ENCODE measurements at regions of chr4 and their contacts with region 1.

Region 1: DNA sequence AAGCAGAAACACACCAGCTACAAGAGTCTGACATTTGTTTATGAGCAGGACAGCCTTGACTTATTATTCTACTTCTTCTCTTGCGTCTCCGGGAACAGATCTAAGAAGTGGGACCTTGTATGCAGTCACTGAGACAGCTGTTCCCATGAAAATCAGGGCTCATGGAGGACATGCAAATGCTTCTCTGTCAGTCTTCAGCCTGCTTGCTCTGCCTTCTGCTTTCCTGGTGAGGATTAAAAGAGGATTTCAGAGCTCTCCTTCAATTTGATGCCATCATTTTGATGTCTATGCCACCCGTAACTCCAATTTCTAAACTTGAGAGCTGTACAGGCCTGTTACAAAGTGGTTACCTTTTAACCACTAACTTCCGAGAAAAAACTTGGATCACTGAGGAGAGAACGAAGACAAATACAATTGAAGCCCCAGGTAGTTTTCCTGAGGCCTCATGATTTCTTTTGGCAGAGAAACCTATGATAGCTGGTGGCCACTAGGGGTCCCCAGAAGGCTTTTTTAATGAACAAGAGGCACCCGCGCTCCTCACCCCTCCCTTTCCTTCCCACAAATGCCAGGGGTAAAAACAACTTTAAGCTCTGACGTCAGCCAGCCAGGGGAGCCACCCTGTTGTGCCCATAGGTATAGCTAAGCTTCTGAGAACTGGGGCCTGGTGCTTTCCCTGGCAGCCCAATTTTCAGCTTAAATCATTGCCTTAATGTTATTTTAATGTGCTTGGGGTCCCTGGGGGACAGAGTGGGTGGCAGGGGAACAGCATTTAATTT is 97.0 kb downstream of the DDIT4L start:
- DNase-seq: peak; percentile 75
- H3K4me3 Mint-ChIP-seq: no peak overlapping the region
- H3K27ac Mint-ChIP-seq: peak overlapping the region; percentile 81
- H3K4me1 Mint-ChIP-seq: peaks cover 56% of the 10 kb centered on the region
- H3K27me3 Mint-ChIP-seq: no peaks in the 10 kb centered on the region

Region 2: GRCh38 chr4:100082852-100083251 is 10.4 kb before region 1 on chr4:
- intact Hi-C with region 1: loop called (anchors 1 kb)
- DNase-seq: no peak
- H3K4me3 Mint-ChIP-seq: no peak overlapping the region
- H3K27ac Mint-ChIP-seq: peak overlapping the region; percentile 67
- H3K4me1 Mint-ChIP-seq: peaks cover 58% of the 10 kb centered on the region
- H3K27me3 Mint-ChIP-seq: no peaks in the 10 kb centered on the region

Region 3: DNA sequence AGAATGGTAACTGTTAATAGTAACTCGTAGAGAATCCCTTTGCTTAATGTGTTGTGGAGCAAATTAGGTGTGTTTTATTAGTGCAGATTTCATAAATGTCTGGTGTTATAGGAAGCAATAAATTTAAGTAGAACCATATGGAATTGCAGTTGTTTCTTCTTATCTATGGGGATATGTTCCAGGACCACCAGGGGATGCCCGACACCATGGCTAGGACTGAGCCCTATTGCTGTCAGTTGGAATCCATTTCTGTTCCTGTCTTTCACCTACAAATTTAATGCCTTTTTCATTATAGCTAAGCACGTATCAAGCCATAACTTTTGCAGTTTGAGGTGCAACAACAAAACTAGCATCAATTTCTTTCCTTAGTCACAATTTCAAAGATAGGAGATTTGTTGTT is 24.5 kb after region 1 on chr4:
- intact Hi-C with region 1: no loop called
- DNase-seq: no peak
- H3K4me3 Mint-ChIP-seq: no peak overlapping the region
- H3K27ac Mint-ChIP-seq: no peak overlapping the region
- H3K4me1 Mint-ChIP-seq: peaks cover 10% of the 10 kb centered on the region
- H3K27me3 Mint-ChIP-seq: peaks cover 3% of the 10 kb centered on the region

Region 4: DNA sequence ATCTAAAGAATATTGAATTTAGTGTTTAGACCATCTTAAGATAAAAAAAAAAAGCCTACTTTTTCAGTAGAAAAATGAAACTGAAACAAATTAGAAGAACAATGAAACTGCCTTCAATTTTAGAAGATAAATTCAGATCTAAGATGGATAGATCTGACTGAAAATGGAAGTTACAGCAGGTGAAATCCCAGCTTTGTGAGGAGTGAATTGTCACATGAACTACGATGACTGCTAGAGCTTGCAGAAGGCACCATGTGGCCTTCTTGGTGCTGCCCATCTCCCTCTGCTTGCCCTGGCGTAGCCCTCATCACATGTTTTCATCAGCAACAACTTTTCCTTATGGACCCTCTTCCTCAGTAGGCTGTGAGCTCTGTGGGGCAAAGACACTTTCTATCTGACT is 475.9 kb after region 1 on chr4:
- intact Hi-C with region 1: loop called (anchors 10 kb)
- DNase-seq: no peak
- H3K4me3 Mint-ChIP-seq: no peak overlapping the region
- H3K27ac Mint-ChIP-seq: peak overlapping the region; percentile 49
- H3K4me1 Mint-ChIP-seq: peaks cover 20% of the 10 kb centered on the region
- H3K27me3 Mint-ChIP-seq: peaks cover 2% of the 10 kb centered on the region

Region 5: DNA sequence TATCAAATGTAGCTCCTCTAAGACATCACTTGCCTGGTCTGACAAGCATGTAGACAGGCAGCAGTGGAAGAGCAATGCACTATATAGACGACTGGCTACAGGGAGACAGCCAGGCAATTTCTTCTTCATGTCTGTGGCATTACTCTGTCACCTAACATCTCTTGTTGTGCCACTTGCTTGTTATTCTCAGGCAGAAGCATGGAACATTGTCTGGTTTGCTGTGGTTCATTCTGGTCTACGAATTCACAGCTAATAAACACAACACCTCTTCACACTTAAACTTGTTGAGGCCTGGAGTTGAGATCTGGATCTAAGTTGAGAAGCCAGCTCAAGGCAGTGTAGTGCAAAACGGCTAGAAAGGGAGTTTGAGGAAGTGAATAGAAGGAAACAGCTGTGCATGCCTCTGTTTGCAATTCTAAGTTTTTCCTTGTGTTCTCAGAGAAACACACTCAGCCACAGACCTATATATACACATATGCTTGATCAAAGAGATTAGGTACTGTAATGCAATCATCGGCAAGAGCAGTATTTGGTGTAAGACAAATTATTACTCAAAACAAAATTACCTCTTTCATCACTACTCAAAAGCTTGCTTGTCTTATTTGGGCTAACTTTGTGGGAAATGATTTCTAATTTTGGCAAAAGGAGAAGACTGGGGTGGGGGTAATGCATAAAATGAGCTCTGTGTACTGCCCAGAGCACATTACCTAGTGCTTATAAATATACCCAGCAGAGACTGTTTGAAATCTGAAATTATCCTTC is 1010.3 kb after region 1 on chr4:
- intact Hi-C with region 1: loop called (anchors 10 kb)
- DNase-seq: no peak
- H3K4me3 Mint-ChIP-seq: no peak overlapping the region
- H3K27ac Mint-ChIP-seq: no peak overlapping the region
- H3K4me1 Mint-ChIP-seq: peaks cover 18% of the 10 kb centered on the region
- H3K27me3 Mint-ChIP-seq: no peaks in the 10 kb centered on the region

Region 6: DNA sequence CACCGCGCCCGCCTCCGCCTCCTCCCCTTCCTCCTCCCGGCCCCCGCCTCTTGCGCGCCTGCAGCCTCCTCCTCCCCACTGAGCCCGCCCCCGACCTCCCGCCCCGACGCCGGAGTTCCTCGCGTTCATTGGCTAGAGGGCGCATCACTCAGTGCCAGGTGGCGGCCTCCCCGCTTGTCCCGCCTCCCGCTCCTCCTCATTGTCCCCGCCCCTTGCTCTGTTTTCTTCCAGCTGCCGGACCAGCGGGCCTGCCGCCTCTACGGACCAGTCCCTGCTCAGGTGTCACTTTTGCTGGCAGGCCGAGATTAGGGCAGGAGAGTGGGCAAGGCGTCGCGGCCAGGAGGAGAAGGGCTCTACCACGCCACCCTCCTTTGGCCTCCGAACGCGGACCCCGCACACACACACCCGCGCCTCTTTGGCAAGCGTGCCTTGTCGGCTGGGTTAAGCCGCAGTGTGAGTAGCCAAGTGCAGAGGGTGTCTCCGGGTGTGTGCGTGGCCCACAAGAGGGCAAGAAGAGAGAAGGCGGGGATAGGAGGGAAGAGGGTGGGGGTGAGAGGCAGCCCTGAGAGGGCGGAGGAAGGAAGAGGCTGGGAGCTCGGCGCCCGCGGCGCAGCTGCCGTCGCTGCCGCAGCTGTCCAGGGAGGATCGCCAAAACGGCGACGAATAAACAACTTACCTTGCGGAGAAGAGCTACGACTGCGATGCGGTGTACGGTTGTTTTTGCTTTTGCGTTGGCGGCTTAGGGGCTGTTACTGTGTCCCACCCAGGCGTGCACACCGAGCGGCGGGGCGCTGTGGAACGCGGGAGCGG is 1254.5 kb after region 1 on chr4:
- intact Hi-C with region 1: loop called (anchors 5 kb)
- DNase-seq: peak; percentile 95
- H3K4me3 Mint-ChIP-seq: peak overlapping the region; percentile 92
- H3K27ac Mint-ChIP-seq: peak overlapping the region; percentile 88
- H3K4me1 Mint-ChIP-seq: peaks cover 33% of the 10 kb centered on the region
- H3K27me3 Mint-ChIP-seq: peaks cover 53% of the 10 kb centered on the region